ENCODE measurements at regions of chr2 and their contacts with region 1.

Region 1: GRCh38 chr2:169513926-169514325 is 4.4 kb downstream of the KLHL41 start:
- H3K4me3 ChIP-seq: no peak overlapping the region
- H3K27ac ChIP-seq: no peak overlapping the region
- H3K4me1 ChIP-seq: peaks cover 14% of the 10 kb centered on the region
- CTCF ChIP-seq: no peak

Region 2: GRCh38 chr2:168796583-168797285 is 717.2 kb before region 1 on chr2:
- CTCF ChIA-PET with region 1: no interaction called
- POLR2A ChIA-PET with region 1: no interaction called
- H3K4me3 ChIP-seq: no peak overlapping the region
- H3K27ac ChIP-seq: no peak overlapping the region
- H3K4me1 ChIP-seq: peaks cover 3% of the 10 kb centered on the region; the same call in 1 of the 2 replicates
- CTCF ChIP-seq: no peak

Region 3: GRCh38 chr2:169528271-169528701 is 14.4 kb after region 1 on chr2:
- CTCF ChIA-PET with region 1: interaction called, 28 read pairs
- POLR2A ChIA-PET with region 1: no interaction called
- H3K4me3 ChIP-seq: no peak overlapping the region
- H3K27ac ChIP-seq: no peak overlapping the region
- H3K4me1 ChIP-seq: no peaks in the 10 kb centered on the region
- CTCF ChIP-seq: peak; percentile 53; the same call in 1 of the 2 replicates

Measured in HEK293 (cell line).